Thyroid gland (tissue), 4 donors: ENCODE measurements at regions of chr2 and their contacts with region 1.

Region 1: GRCh38 chr2:112941753-112942658 is 31.0 kb downstream of the IL37 start:
- DNase-seq: peak; percentile 73 to 76
- H3K4me3 ChIP-seq: no peak overlapping the region
- H3K27ac ChIP-seq: no peak overlapping the region
- H3K4me1 ChIP-seq: peaks cover 0 to 5% of the 10 kb centered on the region in 2 donors
- H3K27me3 ChIP-seq: no peaks in the 10 kb centered on the region
- CTCF ChIP-seq: peak; percentile 48 to 81 (median 62)
- POLR2A ChIP-seq: no peak

Region 2: DNA sequence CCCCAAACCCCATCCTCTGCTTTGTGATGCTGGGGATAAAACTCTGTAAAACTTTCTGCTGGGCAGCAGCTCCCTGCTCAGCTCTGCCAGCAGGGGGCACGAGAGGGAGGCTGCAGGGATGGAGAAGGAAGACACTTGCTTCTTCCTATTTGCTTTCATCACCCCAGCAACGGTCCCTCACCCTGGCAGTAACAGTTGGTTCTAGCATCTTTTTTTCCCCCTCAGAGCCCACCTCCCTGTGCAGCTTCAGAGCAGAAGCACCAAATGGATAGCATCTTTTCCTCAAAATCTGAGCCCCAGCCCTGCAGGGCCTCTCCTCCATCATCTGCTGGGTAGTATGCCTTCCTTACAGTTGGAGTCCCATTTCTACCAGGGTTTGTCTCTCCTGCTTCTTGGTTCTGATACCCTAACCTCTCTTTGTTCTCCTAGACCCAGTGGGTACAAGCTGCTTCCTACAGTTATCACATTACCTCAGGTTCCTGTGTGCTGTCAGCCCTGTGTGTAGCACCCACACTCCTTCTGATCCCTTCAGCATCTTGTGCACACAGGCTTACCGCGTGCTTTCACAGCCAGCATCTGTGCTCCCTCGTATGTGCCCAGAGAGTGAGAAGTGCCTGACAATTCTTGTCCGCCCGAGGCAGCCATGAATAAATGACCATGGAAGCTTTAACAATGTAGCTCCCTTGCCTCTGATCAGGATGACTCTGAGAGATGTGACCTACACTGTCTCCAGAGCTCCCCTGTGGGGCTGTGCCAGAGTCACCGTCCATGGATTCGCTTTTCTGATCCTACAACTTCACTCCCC is 192.0 kb before region 1 on chr2:
- intact Hi-C with region 1: loop called (anchors 10 kb)
- DNase-seq: peak; percentile 57 to 71
- H3K4me3 ChIP-seq: no peak overlapping the region
- H3K27ac ChIP-seq: no peak overlapping the region
- H3K4me1 ChIP-seq: no peaks in the 10 kb centered on the region
- H3K27me3 ChIP-seq: no peaks in the 10 kb centered on the region
- CTCF ChIP-seq: peak; percentile 49 to 89 (median 59)
- POLR2A ChIP-seq: no peak